Activated CD4-positive, alpha-beta T cell treated with anti-CD3 and anti-CD28 coated beads for 36 hours (primary cell): ENCODE measurements at regions of chr14 and their contacts with region 1.

Region 1: DNA sequence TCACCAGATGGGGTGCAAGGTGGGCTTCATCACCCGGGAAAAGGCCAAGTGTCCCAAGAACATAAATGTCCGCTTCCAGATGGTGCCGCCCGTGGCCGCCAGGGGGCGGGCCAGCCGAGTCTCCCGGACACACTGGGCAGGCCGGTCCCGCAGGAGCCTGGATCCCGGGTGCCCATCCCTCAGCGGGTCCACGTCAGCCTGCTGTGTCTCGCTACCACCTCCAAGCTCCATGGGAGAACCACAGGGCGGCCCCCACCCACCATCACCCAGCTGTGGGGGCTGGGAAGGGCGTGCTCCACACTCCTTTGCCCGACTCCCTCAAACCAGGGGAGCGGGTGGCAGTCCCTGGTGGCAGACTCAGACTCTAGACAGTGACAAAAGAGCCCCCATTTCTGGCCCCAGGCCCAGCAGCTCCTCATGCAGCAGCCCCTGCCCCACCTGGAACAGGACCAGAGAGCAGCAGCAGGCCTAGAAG is 22.0 kb upstream of the NUDT14 start:
- DNase-seq: peak; percentile 78
- ATAC-seq: peak; percentile 52
- H3K4me3 Mint-ChIP-seq: no peak overlapping the region
- H3K27ac Mint-ChIP-seq: no peak overlapping the region
- H3K4me1 Mint-ChIP-seq: peaks cover 7% of the 10 kb centered on the region
- H3K27me3 Mint-ChIP-seq: peaks cover 14% of the 10 kb centered on the region

Region 2: GRCh38 chr14:105281371-105282097 is 78.4 kb after region 1 on chr14:
- CTCF ChIA-PET with region 1: interaction called, 3 read pairs
- POLR2A ChIA-PET with region 1: no interaction called
- intact Hi-C with region 1: loop called in 1 of 2 experiments (anchors 1 kb)
- DNase-seq: peak; percentile 38
- ATAC-seq: no peak
- H3K4me3 Mint-ChIP-seq: no peak overlapping the region
- H3K27ac Mint-ChIP-seq: no peak overlapping the region
- H3K4me1 Mint-ChIP-seq: peaks cover 23% of the 10 kb centered on the region
- H3K27me3 Mint-ChIP-seq: no peaks in the 10 kb centered on the region

Region 3: DNA sequence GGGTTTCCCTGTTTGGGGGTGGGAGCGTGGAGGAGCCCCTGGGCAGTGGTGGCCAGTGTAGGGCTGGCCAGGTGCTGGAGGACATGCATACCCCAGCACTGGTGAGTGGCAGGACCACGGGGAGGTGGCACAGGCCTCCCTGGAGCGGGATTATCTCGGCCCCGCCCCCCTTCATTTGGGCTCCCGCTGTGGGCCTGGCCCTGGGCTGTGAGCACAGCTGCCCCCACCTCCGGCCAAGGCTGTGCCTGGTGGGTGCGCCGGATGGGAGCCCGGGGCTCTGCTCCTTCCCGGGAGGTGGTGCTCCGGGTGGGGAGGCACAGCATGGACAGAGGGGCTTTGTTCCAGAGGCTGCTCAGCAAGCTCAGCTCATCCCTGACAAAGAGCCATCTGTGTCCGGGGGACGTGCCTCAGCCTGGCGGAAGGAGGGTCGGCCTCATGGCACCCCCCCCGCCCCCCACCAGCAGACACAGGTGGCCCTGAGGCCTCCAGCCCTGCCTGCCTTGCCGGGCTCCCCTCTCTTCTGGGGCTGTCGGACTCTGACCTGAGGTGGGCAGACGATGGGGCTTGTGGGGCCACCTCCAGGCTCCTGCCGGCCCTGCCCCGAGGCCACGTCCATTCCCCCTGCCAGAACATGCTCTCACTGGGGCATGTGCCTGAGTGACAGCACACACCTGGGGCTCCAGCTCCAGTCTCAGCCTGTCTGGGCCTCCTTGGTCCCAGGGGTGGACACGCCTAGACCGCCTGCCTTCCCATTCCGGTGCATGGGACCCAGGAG is 296.3 kb after region 1 on chr14:
- CTCF ChIA-PET with region 1: no interaction called
- POLR2A ChIA-PET with region 1: no interaction called
- intact Hi-C with region 1: no loop called
- DNase-seq: no peak
- ATAC-seq: no peak
- H3K4me3 Mint-ChIP-seq: no peak overlapping the region
- H3K27ac Mint-ChIP-seq: no peak overlapping the region
- H3K4me1 Mint-ChIP-seq: no peaks in the 10 kb centered on the region
- H3K27me3 Mint-ChIP-seq: no peaks in the 10 kb centered on the region